AG04449 (cell line): ENCODE measurements at regions of chr21 and their contacts with region 1.

Region 1: GRCh38 chr21:46228345-46229051 is at the start of gene LSS:
- DNase-seq: peak; percentile 69
- H3K4me3 ChIP-seq: peak within 1 kb of the TSS; percentile 89
- CTCF ChIP-seq: no peak

Region 2: GRCh38 chr21:46196726-46197125 is 31.8 kb before region 1 on chr21:
- CTCF ChIA-PET with region 1: no interaction called
- POLR2A ChIA-PET with region 1: no interaction called
- DNase-seq: no peak
- H3K4me3 ChIP-seq: no peak overlapping the region
- CTCF ChIP-seq: no peak

Region 3: GRCh38 chr21:46243960-46244361 is 15.5 kb after region 1 on chr21:
- CTCF ChIA-PET with region 1: interaction called, 23 read pairs
- POLR2A ChIA-PET with region 1: no interaction called
- DNase-seq: no peak
- H3K4me3 ChIP-seq: no peak overlapping the region
- CTCF ChIP-seq: no peak

Region 4: GRCh38 chr21:46253610-46254124 is 25.2 kb after region 1 on chr21:
- CTCF ChIA-PET with region 1: interaction called, 22 read pairs
- POLR2A ChIA-PET with region 1: no interaction called
- DNase-seq: no peak
- H3K4me3 ChIP-seq: no peak overlapping the region
- CTCF ChIP-seq: no peak